GM12878 (cell line): ENCODE measurements at regions of chr4 and their contacts with region 1.

Region 1: DNA sequence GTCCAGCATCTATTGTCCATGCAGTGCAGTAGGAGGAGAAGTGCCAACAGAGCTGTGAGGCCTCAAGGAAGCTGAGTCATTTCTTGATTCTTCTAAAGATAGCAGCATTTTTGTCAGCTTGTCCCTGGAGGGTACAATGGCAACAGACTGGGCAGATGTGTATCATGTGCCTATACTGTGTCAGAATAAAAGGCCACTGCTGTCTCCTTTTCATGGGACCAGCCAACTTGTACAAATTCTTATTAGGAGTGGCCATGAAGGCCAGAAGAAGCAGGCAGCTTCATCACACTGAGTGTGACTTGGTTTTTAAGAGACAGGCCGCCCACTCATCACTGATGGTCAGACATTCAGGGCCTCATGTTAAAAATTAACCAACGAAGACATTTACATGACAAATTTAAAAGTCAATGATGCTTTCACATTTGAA is 185.0 kb upstream of the FAM241A start:
- DNase-seq: peak; percentile 82
- ATAC-seq: peak; percentile 93
- H3K4me3 ChIP-seq: no peak overlapping the region
- H3K27ac ChIP-seq: no peak overlapping the region
- H3K4me1 ChIP-seq: no peaks in the 10 kb centered on the region
- H3K27me3 ChIP-seq: no peaks in the 10 kb centered on the region
- CTCF ChIP-seq: no peak
- EP300 ChIP-seq: peak; percentile 14 to 89; a peak in 3 of 4 replicates
- POLR2A ChIP-seq: no peak
- RAD21 ChIP-seq: no peak

Region 2: DNA sequence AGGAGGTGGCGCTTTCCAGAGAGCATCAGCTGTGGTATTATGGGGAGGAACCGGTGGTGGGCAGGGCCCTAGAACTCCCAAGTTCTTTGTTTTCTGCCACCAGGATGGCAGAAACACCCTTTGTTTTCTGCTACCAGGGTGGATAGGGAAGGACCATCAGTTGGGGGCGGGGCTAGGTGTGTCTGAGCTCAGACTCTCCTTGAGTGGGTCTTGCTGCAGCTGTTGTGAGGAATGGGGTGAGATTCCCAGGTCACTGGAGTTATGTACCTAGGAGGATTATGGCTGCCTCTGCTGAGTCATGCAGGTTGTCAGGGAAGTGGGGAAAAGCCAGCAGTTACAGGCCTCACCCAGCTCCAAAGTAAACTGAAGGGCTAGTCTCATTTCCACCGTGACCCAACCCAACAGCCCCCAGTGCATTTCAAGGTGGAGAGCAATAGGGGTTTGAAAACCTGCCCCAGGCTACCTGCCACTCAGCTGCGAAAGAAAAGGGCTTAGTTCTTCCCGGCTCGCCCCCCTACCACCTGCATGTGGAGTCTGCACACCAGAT is 17.2 kb after region 1 on chr4:
- CTCF ChIA-PET with region 1: interaction called, 3 read pairs
- POLR2A ChIA-PET with region 1: no interaction called
- RAD21 ChIA-PET with region 1: no interaction called
- SMC1A ChIA-PET with region 1: interaction called, 11 read pairs
- in situ Hi-C with region 1: no loop called
- intact Hi-C with region 1: no loop called
- DNase-seq: no peak
- ATAC-seq: no peak
- H3K4me3 ChIP-seq: no peak overlapping the region
- H3K27ac ChIP-seq: no peak overlapping the region
- H3K4me1 ChIP-seq: no peaks in the 10 kb centered on the region
- H3K27me3 ChIP-seq: no peaks in the 10 kb centered on the region
- CTCF ChIP-seq: no peak
- EP300 ChIP-seq: no peak
- POLR2A ChIP-seq: no peak
- RAD21 ChIP-seq: no peak

Region 3: GRCh38 chr4:111991797-111992196 is 31.5 kb after region 1 on chr4:
- CTCF ChIA-PET with region 1: interaction called, 8 read pairs
- POLR2A ChIA-PET with region 1: interaction called, 6 read pairs
- RAD21 ChIA-PET with region 1: interaction called, 36 read pairs
- SMC1A ChIA-PET with region 1: interaction called, 58 read pairs
- in situ Hi-C with region 1: no loop called
- intact Hi-C with region 1: loop called (anchors 1 kb)
- DNase-seq: peak; percentile 13
- ATAC-seq: peak; percentile 69
- H3K4me3 ChIP-seq: no peak overlapping the region
- H3K27ac ChIP-seq: no peak overlapping the region
- H3K4me1 ChIP-seq: peaks cover 12% of the 10 kb centered on the region
- H3K27me3 ChIP-seq: peaks cover 0 to 2% of the 10 kb centered on the region in 2 experiments; a peak in 1 of 4 replicates
- CTCF ChIP-seq: no peak
- EP300 ChIP-seq: no peak
- POLR2A ChIP-seq: no peak
- RAD21 ChIP-seq: no peak

Region 4: DNA sequence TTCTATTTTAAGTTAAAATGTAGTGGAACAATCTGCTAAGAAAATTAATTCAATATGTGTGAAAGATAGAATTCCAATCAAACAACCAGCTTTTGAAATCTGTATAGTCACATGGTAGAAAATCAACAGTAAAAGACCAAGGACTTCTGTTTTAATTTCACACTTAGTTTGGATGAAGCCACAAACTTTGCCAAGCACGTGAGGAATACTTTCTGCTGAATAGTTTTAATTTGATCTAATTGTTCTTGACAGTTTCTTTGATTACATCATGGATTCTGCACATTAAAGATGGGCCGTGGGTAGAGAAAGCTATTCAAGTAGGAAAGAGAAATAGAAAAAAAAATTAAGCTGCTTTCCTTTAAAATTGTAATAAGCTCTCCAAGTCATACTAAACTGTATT is 47.1 kb after region 1 on chr4:
- CTCF ChIA-PET with region 1: interaction called, 3 read pairs
- POLR2A ChIA-PET with region 1: interaction called, 4 read pairs
- RAD21 ChIA-PET with region 1: no interaction called
- SMC1A ChIA-PET with region 1: interaction called, 11 read pairs
- in situ Hi-C with region 1: no loop called
- intact Hi-C with region 1: no loop called
- DNase-seq: no peak
- ATAC-seq: no peak
- H3K4me3 ChIP-seq: no peak overlapping the region
- H3K27ac ChIP-seq: no peak overlapping the region
- H3K4me1 ChIP-seq: no peaks in the 10 kb centered on the region
- H3K27me3 ChIP-seq: no peaks in the 10 kb centered on the region
- CTCF ChIP-seq: no peak
- EP300 ChIP-seq: no peak
- POLR2A ChIP-seq: no peak
- RAD21 ChIP-seq: no peak

Region 5: GRCh38 chr4:113499696-113500095 is 1539.4 kb after region 1 on chr4:
- CTCF ChIA-PET with region 1: no interaction called
- POLR2A ChIA-PET with region 1: no interaction called
- RAD21 ChIA-PET with region 1: no interaction called
- SMC1A ChIA-PET with region 1: no interaction called
- in situ Hi-C with region 1: no loop called
- intact Hi-C with region 1: no loop called
- DNase-seq: no peak
- ATAC-seq: no peak
- H3K4me3 ChIP-seq: no peak overlapping the region
- H3K27ac ChIP-seq: no peak overlapping the region
- H3K4me1 ChIP-seq: no peaks in the 10 kb centered on the region
- H3K27me3 ChIP-seq: no peaks in the 10 kb centered on the region
- CTCF ChIP-seq: no peak
- EP300 ChIP-seq: no peak
- POLR2A ChIP-seq: no peak
- RAD21 ChIP-seq: no peak